MCF 10A (cell line): ENCODE measurements at regions of chr1 and their contacts with region 1.

Region 1: GRCh38 chr1:223123011-223123610 is 19.9 kb downstream of the TLR5 start:
- DNase-seq: no peak
- H3K4me3 Mint-ChIP-seq: peak overlapping the region; percentile 3
- H3K27ac Mint-ChIP-seq: no peak overlapping the region
- H3K4me1 Mint-ChIP-seq: peaks cover 9% of the 10 kb centered on the region
- H3K27me3 Mint-ChIP-seq: no peaks in the 10 kb centered on the region
- CTCF ChIP-seq: no peak

Region 2: DNA sequence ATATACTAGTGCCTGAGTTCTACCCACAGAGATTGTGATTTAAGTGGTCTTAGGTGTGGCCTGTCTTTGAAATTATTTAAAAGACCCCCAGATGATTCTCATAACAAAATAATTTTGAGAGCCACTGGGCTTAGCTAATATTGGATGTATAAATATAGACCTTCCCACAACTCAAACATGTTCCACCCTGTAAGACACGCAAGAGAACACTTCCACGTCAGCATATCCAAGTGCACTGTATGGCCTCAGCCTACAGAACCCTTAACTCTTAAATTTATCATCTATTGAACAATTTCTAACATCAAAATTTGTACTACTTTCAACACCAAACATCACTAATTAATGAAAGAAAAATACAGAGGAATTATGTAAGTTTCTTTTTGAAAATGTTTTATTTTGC is 383.6 kb before region 1 on chr1:
- CTCF ChIA-PET with region 1: interaction called, 28 read pairs
- POLR2A ChIA-PET with region 1: interaction called, 3 read pairs
- intact Hi-C with region 1: no loop called
- DNase-seq: no peak
- H3K4me3 Mint-ChIP-seq: no peak overlapping the region
- H3K27ac Mint-ChIP-seq: no peak overlapping the region
- H3K4me1 Mint-ChIP-seq: no peaks in the 10 kb centered on the region
- H3K27me3 Mint-ChIP-seq: no peaks in the 10 kb centered on the region
- CTCF ChIP-seq: no peak

Region 3: GRCh38 chr1:223012938-223013337 is 110.2 kb before region 1 on chr1:
- CTCF ChIA-PET with region 1: no interaction called
- POLR2A ChIA-PET with region 1: no interaction called
- intact Hi-C with region 1: no loop called
- DNase-seq: no peak
- H3K4me3 Mint-ChIP-seq: no peak overlapping the region
- H3K27ac Mint-ChIP-seq: no peak overlapping the region
- H3K4me1 Mint-ChIP-seq: no peaks in the 10 kb centered on the region
- H3K27me3 Mint-ChIP-seq: peaks cover 32% of the 10 kb centered on the region
- CTCF ChIP-seq: no peak

Region 4: DNA sequence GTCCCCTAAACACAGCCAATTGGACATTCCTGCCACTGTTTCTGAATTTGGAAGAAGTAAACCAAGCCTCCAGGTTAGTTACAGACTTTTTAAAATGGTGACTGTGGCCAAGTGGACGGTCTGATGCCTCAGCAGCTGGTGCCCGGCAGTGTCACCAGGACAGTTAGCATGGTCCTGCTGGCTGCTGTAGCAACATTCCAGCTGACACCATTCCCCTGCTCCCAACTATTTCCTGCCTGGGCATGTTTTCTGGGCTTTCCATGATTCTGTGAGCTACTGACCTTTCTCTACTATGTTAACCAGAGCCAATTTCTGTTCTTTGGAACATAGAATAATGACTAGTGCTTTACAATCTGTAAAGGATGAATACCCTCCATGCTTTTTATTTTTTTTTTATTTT is 75.1 kb before region 1 on chr1:
- CTCF ChIA-PET with region 1: no interaction called
- POLR2A ChIA-PET with region 1: no interaction called
- intact Hi-C with region 1: no loop called
- DNase-seq: peak; percentile 29
- H3K4me3 Mint-ChIP-seq: no peak overlapping the region
- H3K27ac Mint-ChIP-seq: no peak overlapping the region
- H3K4me1 Mint-ChIP-seq: no peaks in the 10 kb centered on the region
- H3K27me3 Mint-ChIP-seq: no peaks in the 10 kb centered on the region
- CTCF ChIP-seq: no peak

Region 5: GRCh38 chr1:223087291-223088255 is 35.5 kb before region 1 on chr1:
- CTCF ChIA-PET with region 1: interaction called, 71 read pairs
- POLR2A ChIA-PET with region 1: interaction called, 5 read pairs
- intact Hi-C with region 1: no loop called
- DNase-seq: no peak
- H3K4me3 Mint-ChIP-seq: no peak overlapping the region
- H3K27ac Mint-ChIP-seq: no peak overlapping the region
- H3K4me1 Mint-ChIP-seq: no peaks in the 10 kb centered on the region
- H3K27me3 Mint-ChIP-seq: peaks cover 52% of the 10 kb centered on the region
- CTCF ChIP-seq: no peak

Region 6: GRCh38 chr1:223142795-223143536 is 19.9 kb after region 1 on chr1 and contains the start of gene TLR5:
- CTCF ChIA-PET with region 1: interaction called, 187 read pairs
- POLR2A ChIA-PET with region 1: interaction called, 3 read pairs
- intact Hi-C with region 1: no loop called
- DNase-seq: peak; percentile 92
- H3K4me3 Mint-ChIP-seq: peak within 1 kb of the TSS; percentile 63
- H3K27ac Mint-ChIP-seq: no peak within 1 kb of the TSS
- H3K4me1 Mint-ChIP-seq: peaks cover 6% of the 10 kb centered on the region
- H3K27me3 Mint-ChIP-seq: no peaks in the 10 kb centered on the region
- CTCF ChIP-seq: peak; percentile 96
- total RNA-seq, gene TLR5: 0.81 and 1.5 TPM in 2 replicates

Region 7: GRCh38 chr1:223358826-223359225 is 235.7 kb after region 1 on chr1:
- CTCF ChIA-PET with region 1: interaction called, 171 read pairs
- POLR2A ChIA-PET with region 1: no interaction called
- intact Hi-C with region 1: no loop called
- DNase-seq: peak; percentile 58
- H3K4me3 Mint-ChIP-seq: no peak overlapping the region
- H3K27ac Mint-ChIP-seq: no peak overlapping the region
- H3K4me1 Mint-ChIP-seq: peaks cover 7% of the 10 kb centered on the region
- H3K27me3 Mint-ChIP-seq: peaks cover 51% of the 10 kb centered on the region
- CTCF ChIP-seq: peak; percentile 24

Region 8: GRCh38 chr1:223500560-223501425 is 377.7 kb after region 1 on chr1:
- CTCF ChIA-PET with region 1: interaction called, 10 read pairs
- POLR2A ChIA-PET with region 1: interaction called, 3 read pairs
- intact Hi-C with region 1: no loop called
- DNase-seq: peak; percentile 100
- H3K4me3 Mint-ChIP-seq: no peak overlapping the region
- H3K27ac Mint-ChIP-seq: peak overlapping the region; percentile 78
- H3K4me1 Mint-ChIP-seq: peaks cover 30% of the 10 kb centered on the region
- H3K27me3 Mint-ChIP-seq: no peaks in the 10 kb centered on the region
- CTCF ChIP-seq: no peak